ENCODE measurements at regions of chr3 and their contacts with region 1.

Region 1: GRCh38 chr3:46812237-46812791 is 50.9 kb downstream of the MYL3 start:
- DNase-seq: peak; percentile 14 to 73 (median 49)
- ATAC-seq: peak; percentile 92
- H3K4me3 ChIP-seq: peak overlapping the region; percentile 41
- H3K4me3 Mint-ChIP-seq: peak overlapping the region; percentile 69 to 91 (median 84)
- H3K27ac ChIP-seq: no peak overlapping the region
- H3K27ac Mint-ChIP-seq: peak overlapping the region in 2 of 9 donors; percentile 12 to 67
- H3K4me1 ChIP-seq: no peaks in the 10 kb centered on the region
- H3K4me1 Mint-ChIP-seq: peaks cover 7 to 29% (median 15%) of the 10 kb centered on the region in 7 donors
- H3K27me3 ChIP-seq: no peaks in the 10 kb centered on the region
- H3K27me3 Mint-ChIP-seq: peaks cover 0 to 30% (median 0%) of the 10 kb centered on the region in 5 donors

Region 2: GRCh38 chr3:46845791-46846623 is 33.7 kb after region 1 on chr3:
- CTCF ChIA-PET with region 1: no interaction called
- POLR2A ChIA-PET with region 1: no interaction called
- intact Hi-C with region 1: loop called in 1 of 2 experiments (anchors 2 kb)
- DNase-seq: peak; percentile 69 to 83 (median 78)
- ATAC-seq: peak; percentile 97
- H3K4me3 ChIP-seq: peak overlapping the region; percentile 66
- H3K4me3 Mint-ChIP-seq: peak overlapping the region; percentile 50 to 91 (median 82)
- H3K27ac ChIP-seq: peak overlapping the region; percentile 65
- H3K27ac Mint-ChIP-seq: peak overlapping the region in 6 of 9 donors; percentile 20 to 75 (median 60)
- H3K4me1 ChIP-seq: peaks cover 0 to 11% of the 10 kb centered on the region in 2 donors
- H3K4me1 Mint-ChIP-seq: peaks cover 0 to 14% (median 5%) of the 10 kb centered on the region in 7 donors
- H3K27me3 ChIP-seq: no peaks in the 10 kb centered on the region
- H3K27me3 Mint-ChIP-seq: peaks cover 0 to 36% (median 0%) of the 10 kb centered on the region in 5 donors

Measured in naive thymus-derived CD4-positive, alpha-beta T cell (primary cell).